Upper lobe of right lung (tissue), 1 donor: ENCODE measurements at regions of chr9 and their contacts with region 1.

Region 1: GRCh38 chr9:132800038-132800648 is 77.9 kb downstream of the AK8 start:
- DNase-seq: peak; percentile 89
- ATAC-seq: peak; percentile 89
- H3K4me3 ChIP-seq: no peak overlapping the region
- H3K27ac ChIP-seq: no peak overlapping the region
- H3K4me1 ChIP-seq: peaks cover 5% of the 10 kb centered on the region
- H3K27me3 ChIP-seq: peaks cover 20% of the 10 kb centered on the region
- CTCF ChIP-seq: peak; percentile 91

Region 2: DNA sequence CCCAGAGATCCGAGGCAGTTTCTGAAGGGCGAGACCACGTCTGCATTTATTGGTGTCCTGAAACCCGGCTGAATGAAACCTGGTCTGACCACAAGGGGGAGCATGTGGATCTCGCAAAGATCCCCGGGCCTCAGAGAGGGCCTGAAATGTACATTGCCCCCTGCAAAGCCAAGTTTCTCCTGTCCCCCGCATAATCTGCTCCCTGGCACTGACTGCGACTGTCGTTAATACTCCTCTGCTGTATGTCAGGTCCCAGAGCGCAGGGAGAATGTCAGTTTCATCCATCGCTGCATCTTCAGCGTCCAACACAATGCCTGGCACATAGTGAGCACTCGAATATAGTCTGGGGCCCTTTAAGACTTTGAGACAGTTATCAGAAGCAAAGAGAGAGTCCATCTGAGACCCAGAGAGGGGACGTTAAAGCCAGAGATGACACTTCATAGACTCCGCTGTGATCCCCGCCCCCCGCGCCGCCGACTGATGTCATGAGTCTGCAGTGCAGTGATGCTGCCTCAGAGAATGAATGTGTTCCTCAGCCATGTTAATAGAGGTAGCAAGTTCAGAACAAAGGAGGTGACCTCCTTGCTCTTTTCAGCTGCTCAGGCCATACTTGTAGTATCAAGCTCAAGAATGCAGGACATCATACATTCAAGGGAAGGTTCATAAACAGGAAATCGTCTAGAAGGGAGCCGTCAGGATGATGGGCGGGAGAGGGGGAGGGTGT is 292.2 kb before region 1 on chr9:
- intact Hi-C with region 1: loop called (anchors 10 kb)
- DNase-seq: no peak
- ATAC-seq: peak; percentile 81
- H3K4me3 ChIP-seq: no peak overlapping the region
- H3K27ac ChIP-seq: no peak overlapping the region
- H3K4me1 ChIP-seq: peaks cover 8% of the 10 kb centered on the region
- H3K27me3 ChIP-seq: peaks cover 49% of the 10 kb centered on the region
- CTCF ChIP-seq: peak; percentile 75

Region 3: DNA sequence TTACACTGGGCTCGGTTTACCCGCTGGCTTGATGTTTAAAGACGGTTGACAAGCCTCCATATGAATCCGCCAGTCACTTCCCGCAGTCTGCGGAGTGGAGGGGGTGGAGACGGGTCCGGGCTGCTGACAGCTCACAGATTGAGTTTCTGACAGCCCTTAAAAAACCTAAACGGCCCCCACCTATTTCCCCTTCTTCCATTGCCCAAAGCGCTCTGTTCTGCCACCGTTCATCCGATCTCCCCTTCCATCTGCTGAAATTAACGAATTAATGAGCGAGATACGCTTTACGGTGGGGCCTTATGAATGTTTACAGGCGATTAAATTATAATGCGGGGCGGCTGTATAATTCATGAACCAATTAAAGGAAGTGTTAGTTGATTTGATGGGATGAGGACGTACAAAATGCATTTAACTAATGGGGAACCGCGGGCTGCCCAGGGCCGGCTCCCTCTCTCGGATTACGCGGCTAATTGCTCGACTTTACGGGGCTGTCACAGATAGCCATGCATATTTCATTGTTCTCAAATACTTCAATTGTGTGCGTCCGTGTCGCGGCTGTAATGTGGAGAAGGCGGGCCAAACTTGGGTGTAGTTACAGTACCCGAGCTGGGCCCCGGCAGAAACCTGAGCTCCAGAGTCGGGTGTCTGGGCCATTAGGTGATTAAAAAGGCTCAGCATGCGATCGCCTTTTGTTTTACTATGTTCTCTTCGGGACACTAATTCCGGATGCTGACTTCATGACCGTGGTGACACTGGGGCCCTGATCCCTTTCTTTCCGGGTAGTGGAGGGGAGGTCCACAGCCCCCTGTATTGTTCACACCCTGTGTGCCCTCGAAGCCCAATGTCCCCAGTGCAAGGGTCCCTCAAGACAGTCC is 55.0 kb before region 1 on chr9:
- intact Hi-C with region 1: no loop called
- DNase-seq: peak; percentile 28
- ATAC-seq: no peak
- H3K4me3 ChIP-seq: no peak overlapping the region
- H3K27ac ChIP-seq: no peak overlapping the region
- H3K4me1 ChIP-seq: no peaks in the 10 kb centered on the region
- H3K27me3 ChIP-seq: peaks cover 51% of the 10 kb centered on the region
- CTCF ChIP-seq: no peak